Activated B cell treated with CpG ODN at 0.5 μM for 24 hours (primary cell): ENCODE measurements at regions of chr3 and their contacts with region 1.

Region 1: DNA sequence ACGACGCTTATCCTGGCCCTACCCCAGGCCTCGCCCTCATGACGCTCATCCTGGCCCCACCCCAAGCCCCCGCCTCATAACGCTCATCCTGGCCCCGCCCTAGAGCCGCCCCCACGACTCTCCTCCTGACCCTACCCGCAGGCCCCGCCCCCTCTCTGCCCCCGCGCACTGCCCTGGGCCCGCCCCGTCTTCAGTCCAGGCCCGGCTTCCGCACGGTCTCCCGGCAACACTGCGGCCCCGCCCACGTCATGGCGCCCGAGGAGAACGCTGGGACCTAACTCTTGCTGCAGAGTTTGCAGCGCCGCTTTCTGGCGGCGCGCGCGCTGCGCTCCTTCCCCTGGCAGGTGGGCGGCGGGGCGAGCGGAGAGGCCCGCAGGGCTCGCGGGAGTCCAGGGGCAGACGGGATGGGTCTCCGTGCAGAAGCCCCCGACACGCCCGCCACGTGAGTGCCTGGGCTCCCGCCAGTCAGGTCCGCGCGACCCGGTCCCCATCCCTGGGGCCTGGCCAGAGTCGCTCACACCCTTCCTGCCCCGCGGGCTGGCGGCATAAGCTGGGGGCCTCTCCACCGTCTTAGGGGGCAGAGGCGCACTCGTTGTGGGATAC is 52.5 kb upstream of the ROPN1B start:
- DNase-seq: peak; percentile 91
- ATAC-seq: peak; percentile 90
- H3K4me3 Mint-ChIP-seq: peak overlapping the region; percentile 90
- H3K27ac Mint-ChIP-seq: peak overlapping the region; percentile 90
- H3K4me1 Mint-ChIP-seq: peaks cover 11% of the 10 kb centered on the region
- H3K27me3 Mint-ChIP-seq: no peaks in the 10 kb centered on the region
- CTCF ChIP-seq: no peak

Region 2: DNA sequence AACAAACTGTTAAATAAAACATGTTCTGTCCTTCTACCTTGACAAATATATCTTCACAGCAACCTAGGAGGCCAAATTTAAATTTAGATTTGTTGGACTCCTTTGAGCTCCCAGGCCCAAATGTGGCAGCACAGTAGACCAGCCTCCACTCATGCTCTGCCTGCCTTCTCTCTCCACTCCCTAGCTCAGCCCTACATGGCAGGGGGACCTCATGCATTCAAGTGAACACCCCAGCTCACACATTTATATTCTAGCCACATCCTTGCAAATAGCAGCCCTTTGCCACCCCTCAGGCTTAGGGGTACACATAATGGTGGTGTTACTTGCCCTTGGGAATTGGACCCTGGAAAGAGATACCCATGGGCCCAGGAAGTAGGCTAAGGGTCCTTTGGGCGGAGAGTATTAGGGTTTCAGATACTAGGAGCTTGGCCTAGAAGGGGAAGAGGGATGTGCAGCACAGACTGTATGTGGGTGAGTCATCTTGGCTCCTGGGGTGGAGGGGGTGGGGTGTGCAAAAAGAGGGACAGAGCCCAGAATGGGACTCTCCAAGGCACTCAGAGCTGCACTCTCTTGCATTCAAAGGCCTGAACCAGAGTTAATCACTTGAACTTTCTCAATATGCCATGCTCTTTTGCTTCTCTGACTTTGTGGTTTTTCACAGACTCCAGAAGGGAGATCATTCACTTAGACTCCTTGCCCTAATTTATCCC is 1656.1 kb before region 1 on chr3:
- CTCF ChIA-PET with region 1: no interaction called
- POLR2A ChIA-PET with region 1: no interaction called
- intact Hi-C with region 1: no loop called
- DNase-seq: no peak
- ATAC-seq: no peak
- H3K4me3 Mint-ChIP-seq: no peak overlapping the region
- H3K27ac Mint-ChIP-seq: peak overlapping the region; percentile 30
- H3K4me1 Mint-ChIP-seq: no peaks in the 10 kb centered on the region
- H3K27me3 Mint-ChIP-seq: no peaks in the 10 kb centered on the region
- CTCF ChIP-seq: no peak

Region 3: DNA sequence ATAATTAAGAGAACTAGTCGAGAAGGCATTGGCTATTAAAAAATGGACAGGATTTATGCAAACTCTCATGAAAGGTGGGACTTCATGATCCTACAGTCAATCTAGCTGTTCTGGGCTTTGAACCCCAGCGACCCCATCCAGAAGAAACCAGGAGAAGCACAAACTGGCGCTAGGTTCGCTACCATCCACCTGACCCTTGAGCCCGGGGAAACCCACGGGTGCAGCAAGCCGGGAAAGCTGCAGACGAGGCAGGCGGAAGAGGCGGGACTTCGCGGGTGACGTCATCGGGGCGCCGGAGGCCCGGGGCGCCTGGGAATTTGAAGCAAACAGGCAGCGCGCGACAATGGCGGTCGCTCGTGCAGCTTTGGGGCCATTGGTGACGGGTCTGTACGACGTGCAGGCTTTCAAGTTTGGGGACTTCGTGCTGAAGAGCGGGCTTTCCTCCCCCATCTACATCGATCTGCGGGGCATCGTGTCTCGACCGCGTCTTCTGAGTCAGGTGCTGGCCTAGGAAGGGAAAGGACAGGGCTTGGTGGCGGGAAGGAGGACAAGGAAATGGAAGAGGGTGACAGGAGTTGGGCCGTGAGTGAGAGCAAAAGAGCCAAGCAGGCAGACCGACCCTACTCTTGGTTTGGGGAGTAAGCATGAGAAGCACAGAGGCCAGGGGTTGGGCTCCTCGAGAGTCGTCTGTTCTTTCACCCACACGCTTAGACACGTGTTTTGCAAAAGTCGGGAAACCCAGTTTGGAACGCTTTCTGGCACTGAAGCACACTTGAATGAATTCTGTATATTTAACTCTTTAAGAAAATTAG is 1186.1 kb before region 1 on chr3 and contains the start of gene UMPS:
- CTCF ChIA-PET with region 1: no interaction called
- POLR2A ChIA-PET with region 1: no interaction called
- intact Hi-C with region 1: loop called (anchors 5 kb)
- DNase-seq: peak; percentile 88
- ATAC-seq: peak; percentile 98
- H3K4me3 Mint-ChIP-seq: peak within 1 kb of the TSS; percentile 100
- H3K27ac Mint-ChIP-seq: peak within 1 kb of the TSS; percentile 96
- H3K4me1 Mint-ChIP-seq: peaks cover 29% of the 10 kb centered on the region
- H3K27me3 Mint-ChIP-seq: peaks cover 12% of the 10 kb centered on the region
- CTCF ChIP-seq: no peak
- total RNA-seq, gene UMPS: 27.1 and 31.6 TPM in 2 replicates

Region 4: GRCh38 chr3:125990253-125990970 is 73.9 kb after region 1 on chr3:
- CTCF ChIA-PET with region 1: no interaction called
- POLR2A ChIA-PET with region 1: no interaction called
- intact Hi-C with region 1: loop called (anchors 1 kb)
- DNase-seq: peak; percentile 57
- ATAC-seq: peak; percentile 92
- H3K4me3 Mint-ChIP-seq: peak overlapping the region; percentile 98
- H3K27ac Mint-ChIP-seq: peak overlapping the region; percentile 92
- H3K4me1 Mint-ChIP-seq: peaks cover 11% of the 10 kb centered on the region
- H3K27me3 Mint-ChIP-seq: peaks cover 11% of the 10 kb centered on the region
- CTCF ChIP-seq: no peak

Region 5: GRCh38 chr3:126187920-126188319 is 271.4 kb after region 1 on chr3:
- CTCF ChIA-PET with region 1: no interaction called
- POLR2A ChIA-PET with region 1: no interaction called
- intact Hi-C with region 1: no loop called
- DNase-seq: no peak
- ATAC-seq: no peak
- H3K4me3 Mint-ChIP-seq: no peak overlapping the region
- H3K27ac Mint-ChIP-seq: no peak overlapping the region
- H3K4me1 Mint-ChIP-seq: no peaks in the 10 kb centered on the region
- H3K27me3 Mint-ChIP-seq: peaks cover 6% of the 10 kb centered on the region
- CTCF ChIP-seq: no peak

Region 6: GRCh38 chr3:126197854-126198584 is 281.5 kb after region 1 on chr3:
- CTCF ChIA-PET with region 1: no interaction called
- POLR2A ChIA-PET with region 1: no interaction called
- intact Hi-C with region 1: loop called (anchors 5 kb)
- DNase-seq: no peak
- ATAC-seq: peak; percentile 45
- H3K4me3 Mint-ChIP-seq: no peak overlapping the region
- H3K27ac Mint-ChIP-seq: no peak overlapping the region
- H3K4me1 Mint-ChIP-seq: no peaks in the 10 kb centered on the region
- H3K27me3 Mint-ChIP-seq: peaks cover 14% of the 10 kb centered on the region
- CTCF ChIP-seq: peak; percentile 37

Region 7: GRCh38 chr3:126389112-126389793 is 472.8 kb after region 1 on chr3:
- CTCF ChIA-PET with region 1: no interaction called
- POLR2A ChIA-PET with region 1: no interaction called
- intact Hi-C with region 1: loop called (anchors 5 kb)
- DNase-seq: peak; percentile 50
- ATAC-seq: peak; percentile 95
- H3K4me3 Mint-ChIP-seq: peak overlapping the region; percentile 53
- H3K27ac Mint-ChIP-seq: no peak overlapping the region
- H3K4me1 Mint-ChIP-seq: peaks cover 15% of the 10 kb centered on the region
- H3K27me3 Mint-ChIP-seq: peaks cover 46% of the 10 kb centered on the region
- CTCF ChIP-seq: no peak

Region 8: DNA sequence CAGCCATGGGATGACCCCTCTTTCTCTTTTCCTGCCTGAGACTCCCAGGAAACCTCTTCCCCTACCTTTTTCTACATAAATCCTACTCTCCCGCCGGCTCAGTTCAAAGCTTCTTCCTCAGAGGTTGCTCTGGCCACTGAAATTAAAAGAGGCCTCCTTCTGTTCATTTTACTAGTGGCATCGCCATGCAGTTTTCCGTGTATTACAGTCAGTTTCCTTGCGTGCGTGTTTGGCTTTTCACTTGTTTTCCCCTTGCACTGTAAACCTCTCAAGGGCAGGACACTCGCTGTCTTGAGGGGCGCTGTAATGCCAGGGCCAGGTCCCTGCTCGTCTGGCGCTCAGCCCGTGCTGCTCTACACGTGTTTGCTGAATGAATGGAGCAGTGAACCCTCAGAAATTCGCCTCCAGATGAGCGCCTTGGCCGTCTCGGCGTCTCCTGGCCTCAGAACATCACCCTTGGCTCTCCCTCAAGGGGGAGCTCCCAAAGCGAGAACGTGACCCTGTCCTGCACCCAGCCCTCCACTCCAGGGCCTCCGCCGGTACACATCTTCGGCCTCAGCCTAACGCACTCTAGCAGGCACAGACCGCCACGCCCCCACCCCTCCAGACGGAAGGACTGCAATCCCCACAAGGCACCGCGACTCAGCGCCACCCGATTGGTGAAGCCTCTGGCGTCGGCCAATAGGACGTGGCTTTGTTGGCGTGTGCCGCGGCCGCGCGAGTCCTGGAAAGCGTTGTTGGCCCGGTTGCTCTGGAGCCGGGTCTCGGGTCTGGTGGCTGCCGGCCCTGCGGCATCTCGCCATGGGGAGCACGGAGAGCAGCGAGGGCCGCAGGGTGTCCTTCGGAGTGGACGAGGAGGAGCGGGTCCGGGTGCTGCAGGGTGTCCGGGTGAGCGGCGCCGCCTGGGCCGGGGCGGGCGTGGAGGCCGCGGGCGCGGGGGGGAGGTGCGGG is 787.3 kb after region 1 on chr3 and contains the start of gene CHCHD6:
- CTCF ChIA-PET with region 1: no interaction called
- POLR2A ChIA-PET with region 1: no interaction called
- intact Hi-C with region 1: loop called (anchors 1 kb)
- DNase-seq: peak; percentile 94
- ATAC-seq: peak; percentile 96
- H3K4me3 Mint-ChIP-seq: peak within 1 kb of the TSS; percentile 99
- H3K27ac Mint-ChIP-seq: peak within 1 kb of the TSS; percentile 74
- H3K4me1 Mint-ChIP-seq: peaks cover 17% of the 10 kb centered on the region
- H3K27me3 Mint-ChIP-seq: peaks cover 32% of the 10 kb centered on the region
- CTCF ChIP-seq: no peak
- total RNA-seq, gene CHCHD6: 7.5 and 10.0 TPM in 2 replicates

Region 9: DNA sequence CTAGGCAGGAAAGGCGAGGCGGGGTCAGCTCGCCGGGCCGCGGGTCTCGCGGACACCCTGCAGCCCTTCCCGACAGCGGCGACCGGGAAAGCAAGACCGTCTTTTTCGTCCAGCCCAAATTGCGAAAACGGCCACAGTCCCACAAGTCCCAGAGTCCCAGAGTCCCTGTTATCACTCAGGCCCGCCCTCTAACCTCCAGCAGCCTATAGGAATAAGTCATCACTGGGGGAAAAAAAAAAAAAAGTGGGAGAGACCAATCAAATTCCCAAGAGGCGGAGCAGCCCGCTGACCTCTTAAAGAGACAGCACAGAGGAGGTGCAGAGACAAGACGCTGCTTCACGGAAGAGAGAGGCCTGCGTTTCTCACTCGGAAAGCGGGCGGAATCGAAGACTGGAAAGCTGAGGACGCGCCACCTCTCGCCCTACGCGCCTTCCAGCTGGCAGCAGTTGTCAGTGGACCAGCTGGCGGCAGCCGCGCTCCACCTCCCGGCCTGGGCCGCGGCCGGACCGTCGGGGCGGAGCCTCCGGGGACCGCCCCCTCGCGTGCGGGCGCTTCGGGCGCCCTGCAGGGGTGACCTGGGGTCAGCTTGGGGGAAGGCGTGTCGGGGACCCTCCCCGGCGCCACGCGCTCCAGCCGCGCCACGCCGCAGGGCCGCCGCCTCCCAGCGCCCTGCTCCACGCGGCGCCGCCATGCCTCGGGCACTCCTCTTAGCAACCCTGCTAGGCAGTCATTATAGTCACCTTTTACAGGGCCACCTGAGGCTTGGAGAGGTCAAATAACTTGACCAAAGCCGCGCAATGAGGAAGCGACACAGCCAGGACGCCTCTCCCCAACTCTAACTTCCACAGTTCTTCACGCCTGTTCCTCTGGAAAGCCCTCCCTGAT is 1674.4 kb after region 1 on chr3 and contains the start of gene TPRA1:
- CTCF ChIA-PET with region 1: no interaction called
- POLR2A ChIA-PET with region 1: no interaction called
- intact Hi-C with region 1: loop called (anchors 2 kb)
- DNase-seq: peak; percentile 79
- ATAC-seq: peak; percentile 82
- H3K4me3 Mint-ChIP-seq: peak within 1 kb of the TSS; percentile 90
- H3K27ac Mint-ChIP-seq: peak within 1 kb of the TSS; percentile 85
- H3K4me1 Mint-ChIP-seq: peaks cover 28% of the 10 kb centered on the region
- H3K27me3 Mint-ChIP-seq: no peaks in the 10 kb centered on the region
- CTCF ChIP-seq: no peak
- total RNA-seq, gene TPRA1: 17.5 and 18.3 TPM in 2 replicates